Esophagus muscularis mucosa (tissue), 4 donors: ENCODE measurements at regions of chr14 and their contacts with region 1.

Region 1: DNA sequence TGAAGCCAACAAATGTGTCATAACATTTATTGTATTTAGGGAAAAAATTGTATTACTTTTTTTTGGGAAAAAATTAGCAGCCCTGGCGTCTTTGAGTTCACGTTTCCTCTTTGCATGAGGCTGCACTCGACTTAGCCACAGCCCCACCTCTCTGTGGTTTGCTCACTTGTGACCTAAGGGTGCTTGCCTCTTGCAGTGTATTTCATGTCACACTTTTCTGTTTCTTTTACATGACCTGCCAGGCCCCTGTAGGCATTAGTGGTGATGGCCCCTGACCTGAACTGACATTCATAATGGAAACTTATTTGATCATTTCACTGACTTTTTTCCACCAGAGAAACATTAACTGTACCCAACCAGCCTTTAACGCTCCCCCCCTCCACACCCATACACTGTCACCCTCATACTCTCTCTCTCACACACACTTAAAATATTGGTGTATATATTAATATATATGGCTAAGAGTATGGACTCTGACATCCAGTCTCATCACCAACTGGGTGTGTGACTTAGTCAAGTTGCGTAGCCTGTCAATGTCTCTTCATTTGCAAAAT is 122.9 kb downstream of the PRKCH start:
- DNase-seq: peak; percentile 86
- H3K4me3 ChIP-seq: no peak overlapping the region
- H3K27ac ChIP-seq: no peak overlapping the region
- H3K4me1 ChIP-seq: peaks cover 2 to 8% (median 5%) of the 10 kb centered on the region in 4 donors
- H3K27me3 ChIP-seq: peaks cover 0 to 5% (median 0%) of the 10 kb centered on the region in 4 donors
- CTCF ChIP-seq: no peak
- EP300 ChIP-seq: no peak
- POLR2A ChIP-seq: no peak

Region 2: GRCh38 chr14:61296719-61297502 is 147.4 kb before region 1 on chr14:
- intact Hi-C with region 1: loop called (anchors 10 kb)
- DNase-seq: peak; percentile 4
- H3K4me3 ChIP-seq: no peak overlapping the region
- H3K27ac ChIP-seq: no peak overlapping the region
- H3K4me1 ChIP-seq: peaks cover 0 to 4% (median 0%) of the 10 kb centered on the region in 4 donors
- H3K27me3 ChIP-seq: no peaks in the 10 kb centered on the region
- CTCF ChIP-seq: peak; percentile 38 to 57 (median 46)
- EP300 ChIP-seq: no peak
- POLR2A ChIP-seq: no peak